ENCODE measurements at regions of chr4 and their contacts with region 1.

Region 1: DNA sequence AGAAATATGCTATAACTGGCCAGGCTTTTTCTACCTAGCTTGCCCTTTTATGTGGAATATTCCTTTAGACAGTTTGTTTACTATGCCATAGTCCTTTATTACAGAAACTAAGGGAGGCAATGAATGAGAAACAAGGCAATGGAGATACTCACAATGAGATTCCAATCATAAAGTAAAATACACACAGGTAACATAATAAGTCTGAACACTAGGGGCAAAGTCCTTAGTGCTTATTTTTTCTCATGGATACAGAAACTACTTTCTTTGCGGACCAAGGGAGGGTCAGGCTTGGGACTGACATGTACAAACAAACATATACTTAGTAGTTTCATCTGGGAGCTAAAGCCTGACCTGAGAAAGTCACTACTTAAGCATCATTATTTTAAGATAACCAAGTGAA is 16.0 kb upstream of the UGT8 start:
- DNase-seq: no peak
- ATAC-seq: no peak
- H3K4me3 ChIP-seq: no peak overlapping the region
- H3K4me3 Mint-ChIP-seq: no peak overlapping the region
- H3K27ac ChIP-seq: no peak overlapping the region
- H3K27ac Mint-ChIP-seq: no peak overlapping the region
- H3K4me1 ChIP-seq: no peaks in the 10 kb centered on the region
- H3K4me1 Mint-ChIP-seq: no peaks in the 10 kb centered on the region
- H3K27me3 ChIP-seq: no peaks in the 10 kb centered on the region
- H3K27me3 Mint-ChIP-seq: peaks cover 0 to 14% (median 8%) of the 10 kb centered on the region in 5 donors

Region 2: GRCh38 chr4:114535725-114536124 is 46.9 kb before region 1 on chr4:
- CTCF ChIA-PET with region 1: no interaction called
- POLR2A ChIA-PET with region 1: no interaction called
- intact Hi-C with region 1: no loop called
- DNase-seq: no peak
- ATAC-seq: no peak
- H3K4me3 ChIP-seq: no peak overlapping the region
- H3K4me3 Mint-ChIP-seq: no peak overlapping the region
- H3K27ac ChIP-seq: no peak overlapping the region
- H3K27ac Mint-ChIP-seq: no peak overlapping the region
- H3K4me1 ChIP-seq: no peaks in the 10 kb centered on the region
- H3K4me1 Mint-ChIP-seq: no peaks in the 10 kb centered on the region
- H3K27me3 ChIP-seq: no peaks in the 10 kb centered on the region
- H3K27me3 Mint-ChIP-seq: peaks cover 0 to 5% (median 0%) of the 10 kb centered on the region in 5 donors

Region 3: DNA sequence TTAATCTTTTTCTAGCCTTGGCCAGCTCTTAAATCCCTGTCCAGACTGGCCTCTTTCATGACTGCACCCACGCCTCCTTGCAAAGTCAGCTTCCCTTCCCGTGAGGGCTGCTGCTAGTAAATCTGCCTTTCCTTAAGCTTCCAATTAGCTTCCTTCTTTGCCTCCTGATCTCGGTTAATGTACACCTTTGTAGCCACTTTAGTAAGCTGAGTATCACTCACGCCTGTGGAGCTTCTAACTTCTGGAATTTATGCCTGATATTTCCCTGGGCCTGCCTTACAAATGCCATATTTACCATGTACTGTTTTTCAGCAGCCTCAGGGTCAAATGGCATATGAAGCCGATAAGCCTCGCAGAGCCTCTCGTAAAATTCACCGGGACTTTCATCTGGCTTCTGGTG is 10.9 kb after region 1 on chr4:
- CTCF ChIA-PET with region 1: no interaction called
- POLR2A ChIA-PET with region 1: no interaction called
- intact Hi-C with region 1: loop called in 1 of 2 experiments (anchors 1 kb)
- DNase-seq: no peak
- ATAC-seq: no peak
- H3K4me3 ChIP-seq: no peak overlapping the region
- H3K4me3 Mint-ChIP-seq: no peak overlapping the region
- H3K27ac ChIP-seq: no peak overlapping the region
- H3K27ac Mint-ChIP-seq: no peak overlapping the region
- H3K4me1 ChIP-seq: no peaks in the 10 kb centered on the region
- H3K4me1 Mint-ChIP-seq: peaks cover 0 to 6% (median 2%) of the 10 kb centered on the region in 7 donors
- H3K27me3 ChIP-seq: no peaks in the 10 kb centered on the region
- H3K27me3 Mint-ChIP-seq: peaks cover 21 to 45% (median 37%) of the 10 kb centered on the region in 5 donors